ENCODE measurements at regions of chr18 and their contacts with region 1.

Region 1: DNA sequence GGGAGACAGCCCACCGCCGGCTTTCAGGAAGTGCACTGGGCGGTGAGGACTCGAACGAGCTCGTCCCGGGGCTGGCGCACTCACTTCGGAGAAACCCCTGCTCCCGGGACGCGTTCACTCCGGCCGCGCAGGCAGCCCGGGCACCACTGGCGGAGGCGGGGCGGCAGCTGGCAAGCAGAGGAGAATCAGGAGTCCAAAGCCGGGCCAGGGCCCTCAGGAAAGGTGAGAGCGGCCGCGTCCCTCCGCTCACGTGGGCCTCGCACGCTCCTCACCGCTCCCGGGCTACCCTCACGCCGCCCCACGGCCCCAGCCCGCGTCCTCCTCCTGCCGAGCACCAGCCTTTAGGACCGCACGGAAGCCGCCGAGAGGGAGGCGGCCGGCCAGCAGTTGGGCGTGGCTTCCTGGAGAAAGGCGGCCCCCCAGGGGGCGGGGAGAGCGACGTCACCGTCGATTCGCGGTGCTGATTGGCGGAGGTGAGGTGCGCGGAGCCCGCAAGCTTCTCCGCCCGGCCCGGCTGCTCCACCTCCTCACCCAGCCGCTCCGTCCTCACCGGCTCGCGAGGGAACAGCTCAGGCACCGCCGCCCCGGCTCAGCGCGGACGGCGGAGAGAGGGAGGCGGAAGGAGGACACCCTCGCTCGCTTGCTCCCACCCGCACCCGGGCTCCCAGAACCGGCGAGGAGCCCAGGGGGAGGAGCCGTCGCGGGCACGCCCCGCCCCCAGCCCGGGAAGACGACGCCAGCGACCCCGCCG is at the start of gene ZCCHC2:
- DNase-seq: peak; percentile 100
- ATAC-seq: peak; percentile 75
- H3K4me3 Mint-ChIP-seq: peak within 1 kb of the TSS; percentile 95
- H3K27ac Mint-ChIP-seq: peak within 1 kb of the TSS; percentile 84
- H3K4me1 Mint-ChIP-seq: peaks cover 31% of the 10 kb centered on the region
- H3K27me3 Mint-ChIP-seq: no peaks in the 10 kb centered on the region
- CTCF ChIP-seq: no peak
- total RNA-seq, gene ZCCHC2: 28.6 and 29.4 TPM in 2 replicates

Region 2: DNA sequence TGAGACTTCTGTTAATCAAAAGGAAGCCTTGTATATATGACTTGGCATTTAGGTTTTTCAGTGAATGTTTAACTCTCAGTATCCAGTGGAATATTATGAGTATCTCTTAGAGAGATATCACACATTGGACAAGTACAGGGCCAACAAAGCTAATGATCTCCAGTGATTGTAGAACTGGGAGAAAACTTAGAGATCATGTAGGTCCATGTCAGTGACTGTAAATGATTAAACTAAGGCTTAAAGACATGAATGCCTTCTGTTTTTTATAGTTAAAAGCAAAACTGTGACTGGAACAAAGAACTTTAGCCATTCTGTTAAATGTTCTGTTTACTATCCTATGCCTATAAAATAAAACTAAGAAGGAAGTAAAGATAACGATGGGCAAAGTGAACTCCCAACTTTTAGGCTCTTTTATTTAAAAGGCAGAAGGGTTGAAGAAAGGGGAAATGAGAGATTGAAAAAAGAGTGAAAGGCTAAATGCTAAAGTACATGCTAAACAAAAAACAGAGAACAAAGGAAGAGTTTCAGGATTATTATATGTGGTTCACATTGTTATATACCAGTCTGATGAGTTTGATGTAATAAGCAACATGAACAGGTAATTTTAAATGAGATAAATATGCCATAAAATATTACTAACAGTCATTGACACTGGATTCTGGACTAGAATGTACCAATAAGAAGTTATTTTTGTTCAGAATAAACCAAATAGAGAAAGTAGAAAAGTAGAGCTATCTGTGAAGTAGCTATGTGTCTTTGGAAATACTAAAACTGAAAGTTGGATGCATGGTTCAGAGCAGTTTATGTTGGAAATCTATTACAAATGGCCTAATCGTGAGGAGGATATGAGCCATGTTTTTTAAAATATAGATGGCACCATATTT is 234.7 kb before region 1 on chr18:
- CTCF ChIA-PET with region 1: no interaction called
- POLR2A ChIA-PET with region 1: no interaction called
- intact Hi-C with region 1: loop called (anchors 5 kb)
- DNase-seq: no peak
- ATAC-seq: peak; percentile 9
- H3K4me3 Mint-ChIP-seq: peak overlapping the region; percentile 54
- H3K27ac Mint-ChIP-seq: peak overlapping the region; percentile 72
- H3K4me1 Mint-ChIP-seq: peaks cover 26% of the 10 kb centered on the region
- H3K27me3 Mint-ChIP-seq: no peaks in the 10 kb centered on the region
- CTCF ChIP-seq: no peak

Region 3: GRCh38 chr18:62425465-62426195 is 97.0 kb before region 1 on chr18:
- CTCF ChIA-PET with region 1: interaction called, 4 read pairs
- POLR2A ChIA-PET with region 1: interaction called, 12 read pairs
- intact Hi-C with region 1: loop called (anchors 1 kb)
- DNase-seq: no peak
- ATAC-seq: no peak
- H3K4me3 Mint-ChIP-seq: no peak overlapping the region
- H3K27ac Mint-ChIP-seq: no peak overlapping the region
- H3K4me1 Mint-ChIP-seq: peaks cover 10% of the 10 kb centered on the region
- H3K27me3 Mint-ChIP-seq: peaks cover 3% of the 10 kb centered on the region
- CTCF ChIP-seq: peak; percentile 50

Region 4: DNA sequence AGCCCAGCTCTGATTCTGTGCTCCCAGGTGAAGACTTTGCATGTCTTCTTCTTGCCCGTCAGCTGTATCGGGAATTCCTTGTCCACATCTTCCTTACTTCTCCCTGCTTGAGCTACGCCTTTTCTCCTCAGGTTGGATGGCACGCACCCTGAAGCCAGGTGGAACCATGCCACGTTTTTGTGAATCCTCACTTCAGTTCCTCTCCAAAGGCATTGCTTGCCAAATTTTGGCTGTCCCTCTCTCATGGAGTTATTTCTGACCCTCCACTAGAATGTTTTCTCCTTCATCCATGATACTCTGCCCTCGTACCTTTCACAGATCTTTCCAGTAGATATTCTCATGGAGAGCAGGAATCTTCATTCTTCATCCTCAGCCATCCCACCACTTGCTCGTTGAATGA is 20.3 kb after region 1 on chr18:
- CTCF ChIA-PET with region 1: no interaction called
- POLR2A ChIA-PET with region 1: no interaction called
- intact Hi-C with region 1: loop called (anchors 2 kb)
- DNase-seq: no peak
- ATAC-seq: no peak
- H3K4me3 Mint-ChIP-seq: no peak overlapping the region
- H3K27ac Mint-ChIP-seq: no peak overlapping the region
- H3K4me1 Mint-ChIP-seq: peaks cover under 1% of the 10 kb centered on the region
- H3K27me3 Mint-ChIP-seq: no peaks in the 10 kb centered on the region
- CTCF ChIP-seq: no peak

Region 5: DNA sequence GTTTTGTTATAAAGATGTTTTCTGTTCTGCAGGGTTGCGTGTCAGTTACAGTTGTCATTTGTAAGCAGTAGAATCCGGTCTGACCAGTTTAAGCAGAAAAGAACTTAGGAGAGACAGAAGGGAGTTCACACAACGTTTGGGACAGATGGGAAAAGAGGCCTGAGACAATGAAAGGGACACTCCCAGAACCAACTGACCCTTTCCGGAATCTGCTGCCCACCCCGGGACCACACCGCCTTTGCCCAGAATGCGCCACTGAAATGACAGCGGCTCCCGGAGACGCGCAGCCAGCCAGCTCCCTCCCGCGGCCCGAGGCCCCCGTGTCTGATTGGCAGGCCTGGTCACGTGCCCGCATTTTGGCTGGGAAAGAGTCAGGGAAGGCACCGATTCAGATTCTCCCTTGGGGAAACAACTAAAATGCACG is 552.3 kb after region 1 on chr18:
- CTCF ChIA-PET with region 1: no interaction called
- POLR2A ChIA-PET with region 1: no interaction called
- intact Hi-C with region 1: loop called (anchors 5 kb)
- DNase-seq: peak; percentile 45
- ATAC-seq: peak; percentile 58
- H3K4me3 Mint-ChIP-seq: peak overlapping the region; percentile 78
- H3K27ac Mint-ChIP-seq: peak overlapping the region; percentile 0
- H3K4me1 Mint-ChIP-seq: peaks cover 25% of the 10 kb centered on the region
- H3K27me3 Mint-ChIP-seq: no peaks in the 10 kb centered on the region
- CTCF ChIP-seq: no peak

Region 6: DNA sequence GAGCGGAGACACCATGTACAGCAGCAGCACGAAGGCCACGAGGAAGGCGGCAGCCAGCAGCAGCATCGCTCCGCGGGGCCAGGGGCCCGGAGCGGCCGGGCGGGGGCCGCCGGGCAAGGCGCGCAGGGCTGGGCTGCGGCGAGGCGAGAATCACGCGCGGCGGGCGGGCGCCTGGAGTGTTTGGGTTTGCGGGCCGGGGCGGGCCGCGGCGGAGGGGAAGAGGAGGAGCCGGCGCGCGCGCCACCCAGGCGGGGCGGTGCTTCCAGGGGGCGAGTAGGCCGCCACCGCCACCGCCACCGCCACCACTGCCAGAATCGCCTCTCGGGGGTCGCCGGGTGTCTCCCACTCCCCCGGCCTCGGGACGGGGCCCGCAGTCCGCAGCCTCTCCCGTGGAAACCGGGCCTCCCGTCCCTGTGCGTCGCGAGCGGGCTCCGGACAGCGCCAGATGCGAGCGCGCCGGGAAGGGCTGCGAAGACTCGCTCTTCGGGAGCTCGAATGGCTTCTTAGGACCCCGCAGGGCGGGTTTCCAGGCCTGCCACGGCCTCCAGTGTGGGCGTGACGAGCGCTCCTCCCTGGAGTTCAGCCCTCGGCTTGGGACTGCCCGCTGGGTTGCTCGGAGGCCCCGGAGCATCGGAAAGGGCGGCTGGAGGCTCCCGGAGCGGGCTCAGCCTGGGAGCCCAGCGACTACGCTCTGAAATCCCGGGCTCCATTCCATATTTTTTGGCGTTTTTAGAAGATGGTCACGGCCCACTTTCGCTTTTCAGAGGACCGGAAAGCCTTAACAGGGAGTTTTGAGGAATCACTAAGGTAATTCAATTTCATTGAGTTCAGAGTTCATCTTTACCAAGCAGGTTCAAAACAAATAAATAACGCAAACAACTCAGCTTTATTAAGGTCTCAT is 844.6 kb after region 1 on chr18 and contains the start of gene KDSR:
- CTCF ChIA-PET with region 1: no interaction called
- POLR2A ChIA-PET with region 1: no interaction called
- intact Hi-C with region 1: loop called (anchors 1 kb)
- DNase-seq: peak; percentile 88
- ATAC-seq: peak; percentile 92
- H3K4me3 Mint-ChIP-seq: peak within 1 kb of the TSS; percentile 88
- H3K27ac Mint-ChIP-seq: peak within 1 kb of the TSS; percentile 71
- H3K4me1 Mint-ChIP-seq: peaks cover 23% of the 10 kb centered on the region
- H3K27me3 Mint-ChIP-seq: no peaks in the 10 kb centered on the region
- CTCF ChIP-seq: no peak
- total RNA-seq, gene KDSR: 15.0 and 15.3 TPM in 2 replicates

Region 7: GRCh38 chr18:63969960-63970802 is 1447.5 kb after region 1 on chr18 and contains the start of gene SERPINB8:
- CTCF ChIA-PET with region 1: no interaction called
- POLR2A ChIA-PET with region 1: no interaction called
- intact Hi-C with region 1: loop called (anchors 10 kb)
- DNase-seq: peak; percentile 71
- ATAC-seq: peak; percentile 82
- H3K4me3 Mint-ChIP-seq: peak within 1 kb of the TSS; percentile 95
- H3K27ac Mint-ChIP-seq: peak within 1 kb of the TSS; percentile 94
- H3K4me1 Mint-ChIP-seq: peaks cover 51% of the 10 kb centered on the region
- H3K27me3 Mint-ChIP-seq: peaks cover 6% of the 10 kb centered on the region
- CTCF ChIP-seq: no peak
- total RNA-seq, gene SERPINB8: 20.9 and 29.5 TPM in 2 replicates